ENCODE measurements at regions of chr17 and their contacts with region 1.

Region 1: GRCh38 chr17:50944054-50944901 is 78.1 kb upstream of the TOB1 start:
- DNase-seq: peak; percentile 57 to 92 (median 78)
- ATAC-seq: peak; percentile 89
- H3K4me3 ChIP-seq: peak overlapping the region; percentile 60 to 66
- H3K4me3 Mint-ChIP-seq: peak overlapping the region; percentile 76
- H3K27ac ChIP-seq: peak overlapping the region; percentile 72 to 76
- H3K27ac Mint-ChIP-seq: peak overlapping the region; percentile 90
- H3K4me1 ChIP-seq: peaks cover 41% of the 10 kb centered on the region
- H3K4me1 Mint-ChIP-seq: peaks cover 37% of the 10 kb centered on the region
- H3K27me3 ChIP-seq: no peaks in the 10 kb centered on the region
- H3K27me3 Mint-ChIP-seq: no peaks in the 10 kb centered on the region
- CTCF ChIP-seq: no peak

Region 2: DNA sequence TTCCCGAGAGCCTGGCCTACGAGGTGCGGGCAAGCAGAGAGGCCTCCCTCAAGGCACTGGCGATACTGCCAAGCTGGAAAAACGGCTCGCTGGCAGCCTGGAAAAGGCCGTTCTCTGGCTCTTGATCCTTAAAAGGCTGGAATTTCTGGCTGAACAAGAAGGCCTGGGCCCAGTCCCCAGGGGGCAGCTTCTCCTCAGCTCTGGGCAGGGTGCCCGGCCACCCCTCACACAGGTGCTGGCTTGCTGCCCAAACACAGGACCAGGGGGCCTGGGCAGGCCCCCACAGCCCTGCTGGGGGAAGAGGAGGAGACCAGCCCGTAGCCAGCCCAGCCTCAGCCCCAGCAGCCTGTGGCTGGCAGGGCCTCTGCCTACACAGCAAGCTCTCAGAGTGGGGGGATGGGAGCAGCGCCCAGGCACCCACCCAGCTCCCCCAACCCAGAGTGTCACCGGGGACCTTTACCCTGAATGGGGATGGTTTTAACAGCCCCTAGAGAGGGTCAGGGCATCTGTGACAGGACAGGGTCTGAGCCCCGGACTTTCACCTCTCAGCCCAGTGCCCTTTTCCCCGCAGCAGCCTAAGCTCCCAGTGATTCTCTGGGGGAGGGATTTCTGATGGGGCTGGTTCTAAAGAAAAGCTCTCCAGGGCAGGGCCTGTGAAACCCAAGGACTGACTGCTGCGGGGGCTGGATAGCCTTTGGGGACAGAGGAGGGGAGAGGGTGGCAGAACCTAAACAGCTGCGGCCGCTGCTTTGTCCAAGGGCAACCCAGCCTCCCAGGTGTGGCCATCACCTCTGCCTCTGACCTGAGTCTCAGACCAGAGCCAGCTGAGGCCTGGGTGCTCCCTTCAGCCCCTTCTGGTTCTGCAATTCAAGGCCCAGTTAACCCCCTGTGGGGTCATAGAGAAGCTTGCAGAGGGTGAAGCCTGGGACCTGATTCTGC is 39.5 kb before region 1 on chr17:
- CTCF ChIA-PET with region 1: interaction called, 11 read pairs
- POLR2A ChIA-PET with region 1: interaction called, 5 read pairs
- intact Hi-C with region 1: loop called in 1 of 2 experiments (anchors 5 kb)
- DNase-seq: peak in 1 of 9 experiments; percentile 29
- ATAC-seq: no peak
- H3K4me3 ChIP-seq: no peak overlapping the region
- H3K4me3 Mint-ChIP-seq: no peak overlapping the region
- H3K27ac ChIP-seq: peak overlapping the region; percentile 46 to 73
- H3K27ac Mint-ChIP-seq: peak overlapping the region; percentile 89
- H3K4me1 ChIP-seq: peaks cover 67% of the 10 kb centered on the region
- H3K4me1 Mint-ChIP-seq: peaks cover 61% of the 10 kb centered on the region
- H3K27me3 ChIP-seq: no peaks in the 10 kb centered on the region
- H3K27me3 Mint-ChIP-seq: no peaks in the 10 kb centered on the region
- CTCF ChIP-seq: no peak

Region 3: DNA sequence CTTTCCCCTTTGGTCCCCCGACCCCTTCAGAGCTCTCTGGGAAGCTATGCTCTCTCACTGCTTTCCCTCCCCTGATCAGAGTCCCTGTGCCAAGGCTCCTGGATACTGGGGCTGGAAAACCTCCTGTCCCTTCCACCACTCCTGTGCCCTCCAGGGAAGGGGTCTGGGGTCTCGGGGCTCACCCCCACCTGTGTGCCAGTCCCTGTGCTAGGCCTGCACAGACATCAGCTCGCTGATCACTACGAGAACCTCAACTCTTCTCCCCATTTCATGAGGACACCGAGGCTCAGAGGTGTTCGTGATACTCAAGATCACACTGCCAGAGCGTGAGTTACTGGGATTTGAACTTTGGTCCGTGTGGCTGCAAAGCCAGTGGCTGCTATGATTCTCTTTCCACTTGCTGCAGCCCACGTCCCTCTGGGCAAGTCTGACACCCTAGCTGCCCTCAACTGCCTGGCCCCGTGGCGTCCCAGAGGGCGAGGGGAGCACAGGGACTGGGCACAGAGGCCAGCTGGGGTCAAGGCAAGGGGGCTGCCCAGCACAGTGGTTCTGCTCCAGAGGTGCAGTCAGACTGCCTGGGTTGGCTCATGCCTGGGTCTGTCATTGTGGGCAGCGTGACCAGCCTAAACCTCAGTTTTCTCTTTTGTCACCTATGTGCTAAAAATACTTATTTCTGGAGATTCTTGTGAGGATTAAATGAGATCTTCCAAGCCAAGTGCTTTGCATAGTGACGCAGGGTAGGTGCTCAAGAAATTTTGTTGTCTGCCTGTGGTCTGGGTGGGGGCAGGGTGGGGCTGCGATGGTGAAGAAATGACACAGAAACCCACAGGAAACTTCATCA is 34.3 kb before region 1 on chr17:
- CTCF ChIA-PET with region 1: interaction called, 11 read pairs
- POLR2A ChIA-PET with region 1: interaction called, 5 read pairs
- intact Hi-C with region 1: loop called in 1 of 2 experiments (anchors 2 kb)
- DNase-seq: peak; percentile 71 to 94 (median 77)
- ATAC-seq: peak; percentile 87
- H3K4me3 ChIP-seq: peak overlapping the region in 1 of 2 experiments; percentile 24
- H3K4me3 Mint-ChIP-seq: peak overlapping the region; percentile 55
- H3K27ac ChIP-seq: peak overlapping the region; percentile 83 to 92
- H3K27ac Mint-ChIP-seq: peak overlapping the region; percentile 93
- H3K4me1 ChIP-seq: peaks cover 74% of the 10 kb centered on the region
- H3K4me1 Mint-ChIP-seq: peaks cover 61% of the 10 kb centered on the region
- H3K27me3 ChIP-seq: no peaks in the 10 kb centered on the region
- H3K27me3 Mint-ChIP-seq: no peaks in the 10 kb centered on the region
- CTCF ChIP-seq: no peak

Region 4: GRCh38 chr17:50919321-50920085 is 24.8 kb before region 1 on chr17:
- CTCF ChIA-PET with region 1: interaction called, 4 read pairs
- POLR2A ChIA-PET with region 1: interaction called, 10 read pairs
- intact Hi-C with region 1: no loop called
- DNase-seq: peak; percentile 69 to 96 (median 86)
- ATAC-seq: peak; percentile 83
- H3K4me3 ChIP-seq: peak overlapping the region in 1 of 2 experiments; percentile 17
- H3K4me3 Mint-ChIP-seq: peak overlapping the region; percentile 69
- H3K27ac ChIP-seq: peak overlapping the region; percentile 86 to 89
- H3K27ac Mint-ChIP-seq: peak overlapping the region; percentile 94
- H3K4me1 ChIP-seq: peaks cover 50% of the 10 kb centered on the region
- H3K4me1 Mint-ChIP-seq: peaks cover 40% of the 10 kb centered on the region
- H3K27me3 ChIP-seq: no peaks in the 10 kb centered on the region
- H3K27me3 Mint-ChIP-seq: no peaks in the 10 kb centered on the region
- CTCF ChIP-seq: no peak

Region 5: GRCh38 chr17:50931144-50931908 is 13.0 kb before region 1 on chr17:
- CTCF ChIA-PET with region 1: interaction called, 3 read pairs
- POLR2A ChIA-PET with region 1: interaction called, 15 read pairs
- intact Hi-C with region 1: loop called in 1 of 2 experiments (anchors 1 kb)
- DNase-seq: peak in 7 of 9 experiments; percentile 39 to 79 (median 56)
- ATAC-seq: peak; percentile 75
- H3K4me3 ChIP-seq: peak overlapping the region; percentile 46 to 55
- H3K4me3 Mint-ChIP-seq: peak overlapping the region; percentile 90
- H3K27ac ChIP-seq: peak overlapping the region; percentile 71
- H3K27ac Mint-ChIP-seq: peak overlapping the region; percentile 99
- H3K4me1 ChIP-seq: peaks cover 30% of the 10 kb centered on the region
- H3K4me1 Mint-ChIP-seq: peaks cover 41% of the 10 kb centered on the region
- H3K27me3 ChIP-seq: no peaks in the 10 kb centered on the region
- H3K27me3 Mint-ChIP-seq: no peaks in the 10 kb centered on the region
- CTCF ChIP-seq: no peak

Region 6: GRCh38 chr17:50966163-50966666 is 21.9 kb after region 1 on chr17:
- CTCF ChIA-PET with region 1: no interaction called
- POLR2A ChIA-PET with region 1: no interaction called
- intact Hi-C with region 1: no loop called
- DNase-seq: no peak
- ATAC-seq: no peak
- H3K4me3 ChIP-seq: no peak overlapping the region
- H3K4me3 Mint-ChIP-seq: no peak overlapping the region
- H3K27ac ChIP-seq: no peak overlapping the region
- H3K27ac Mint-ChIP-seq: peak overlapping the region; percentile 10
- H3K4me1 ChIP-seq: no peaks in the 10 kb centered on the region
- H3K4me1 Mint-ChIP-seq: peaks cover 4% of the 10 kb centered on the region
- H3K27me3 ChIP-seq: no peaks in the 10 kb centered on the region
- H3K27me3 Mint-ChIP-seq: no peaks in the 10 kb centered on the region
- CTCF ChIP-seq: no peak

Region 7: DNA sequence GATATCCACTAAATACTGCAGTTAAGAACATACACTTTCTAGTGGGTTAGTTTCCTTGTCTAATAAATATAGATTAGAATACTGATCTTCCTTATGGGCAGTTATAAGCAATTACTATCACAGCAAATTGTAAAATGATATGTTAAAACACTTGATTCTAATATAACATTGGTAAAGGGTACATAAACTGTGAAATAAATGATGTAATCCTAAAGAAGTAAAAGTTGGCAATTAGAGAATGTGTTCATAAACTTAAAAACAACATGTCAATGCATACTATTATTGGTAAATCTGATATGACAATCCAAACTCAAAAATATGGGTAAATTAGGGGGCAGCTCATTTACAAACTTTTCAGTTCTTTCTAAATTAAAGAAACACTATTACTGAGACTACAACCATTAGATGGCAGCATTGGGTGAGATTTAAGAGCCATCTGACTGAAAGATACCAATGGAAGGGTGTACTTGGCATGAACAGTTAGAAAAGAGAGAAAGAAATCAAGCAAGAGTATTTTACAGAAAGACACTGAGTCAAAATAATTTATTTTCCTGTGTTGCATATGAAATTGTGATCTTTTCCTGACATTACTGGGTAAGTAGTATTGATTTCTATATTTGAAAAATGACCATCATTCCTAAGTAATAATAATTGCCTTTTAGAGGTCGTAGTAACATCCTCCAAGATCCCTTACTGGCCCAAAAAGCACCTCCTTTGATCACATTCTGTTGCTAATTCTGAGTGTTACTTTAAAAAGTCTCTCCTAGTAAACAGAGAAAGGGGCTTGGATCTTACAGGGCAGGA is 56.8 kb after region 1 on chr17:
- CTCF ChIA-PET with region 1: no interaction called
- POLR2A ChIA-PET with region 1: no interaction called
- intact Hi-C with region 1: no loop called
- DNase-seq: peak in 3 of 9 experiments; percentile 14 to 81 (median 74)
- ATAC-seq: peak; percentile 88
- H3K4me3 ChIP-seq: no peak overlapping the region
- H3K4me3 Mint-ChIP-seq: no peak overlapping the region
- H3K27ac ChIP-seq: no peak overlapping the region
- H3K27ac Mint-ChIP-seq: no peak overlapping the region
- H3K4me1 ChIP-seq: no peaks in the 10 kb centered on the region
- H3K4me1 Mint-ChIP-seq: peaks cover 5% of the 10 kb centered on the region
- H3K27me3 ChIP-seq: no peaks in the 10 kb centered on the region
- H3K27me3 Mint-ChIP-seq: no peaks in the 10 kb centered on the region
- CTCF ChIP-seq: peak; percentile 76